Activated naive CD4-positive, alpha-beta T cell treated with anti-CD3 and anti-CD28 coated beads for 36 hours (primary cell): ENCODE measurements at regions of chr1 and their contacts with region 1.

Region 1: GRCh38 chr1:117929173-117929989 is at the starts of genes GDAP2 and WDR3:
- DNase-seq: peak; percentile 97
- H3K4me3 Mint-ChIP-seq: peak within 1 kb of the TSS; percentile 96
- H3K27ac Mint-ChIP-seq: peak within 1 kb of the TSS; percentile 79
- H3K4me1 Mint-ChIP-seq: peaks cover 54% of the 10 kb centered on the region
- H3K27me3 Mint-ChIP-seq: no peaks in the 10 kb centered on the region
- total RNA-seq, gene GDAP2: 19.9 to 20.0 TPM
- total RNA-seq, gene WDR3: 45.2 to 49.6 TPM

Region 2: GRCh38 chr1:117367047-117368018 is 562.0 kb before region 1 on chr1 and contains the start of gene MAN1A2:
- CTCF ChIA-PET with region 1: no interaction called
- intact Hi-C with region 1: loop called (anchors 1 kb)
- DNase-seq: peak; percentile 76
- H3K4me3 Mint-ChIP-seq: peak within 1 kb of the TSS; percentile 94
- H3K27ac Mint-ChIP-seq: peak within 1 kb of the TSS; percentile 94
- H3K4me1 Mint-ChIP-seq: peaks cover 48% of the 10 kb centered on the region
- H3K27me3 Mint-ChIP-seq: no peaks in the 10 kb centered on the region
- total RNA-seq, gene MAN1A2: 14.6 to 17.4 TPM

Region 3: DNA sequence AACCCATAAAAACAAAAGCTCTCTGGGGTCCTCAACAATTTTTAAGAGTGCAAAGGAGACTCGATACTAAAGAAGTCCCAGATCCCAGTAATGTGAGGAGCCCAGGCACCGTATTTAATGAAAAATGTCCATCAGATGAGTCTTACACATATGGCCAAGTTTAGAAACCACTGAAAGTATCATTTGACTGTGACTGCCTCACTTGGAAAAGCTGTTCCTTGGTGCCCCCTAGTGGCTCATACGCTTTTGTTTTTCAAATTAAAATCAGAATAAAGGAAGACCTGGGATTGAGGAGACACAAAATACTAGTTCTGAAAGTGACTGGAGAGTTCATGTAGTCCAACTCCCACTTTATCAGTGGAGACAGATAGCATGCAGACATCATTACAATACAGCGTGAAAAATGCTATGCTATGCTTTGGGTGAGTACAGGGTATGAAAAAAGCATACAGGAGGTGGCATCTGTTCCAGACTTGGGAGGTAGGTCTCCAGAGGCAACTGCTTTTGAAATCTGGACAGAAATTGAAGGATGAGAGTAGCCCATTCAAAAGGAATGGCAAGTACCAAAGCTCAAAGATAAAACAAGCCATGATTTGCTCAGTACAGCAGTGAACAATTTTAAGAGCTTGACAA is 33.8 kb before region 1 on chr1:
- CTCF ChIA-PET with region 1: interaction called, 9 read pairs
- intact Hi-C with region 1: loop called (anchors 2 kb)
- DNase-seq: peak; percentile 80
- H3K4me3 Mint-ChIP-seq: no peak overlapping the region
- H3K27ac Mint-ChIP-seq: no peak overlapping the region
- H3K4me1 Mint-ChIP-seq: no peaks in the 10 kb centered on the region
- H3K27me3 Mint-ChIP-seq: no peaks in the 10 kb centered on the region

Region 4: GRCh38 chr1:117964290-117965038 is 35.1 kb after region 1 on chr1:
- CTCF ChIA-PET with region 1: no interaction called
- intact Hi-C with region 1: loop called (anchors 2 kb)
- DNase-seq: no peak
- H3K4me3 Mint-ChIP-seq: no peak overlapping the region
- H3K27ac Mint-ChIP-seq: peak overlapping the region; percentile 50
- H3K4me1 Mint-ChIP-seq: peaks cover 27% of the 10 kb centered on the region
- H3K27me3 Mint-ChIP-seq: no peaks in the 10 kb centered on the region